ENCODE measurements at regions of chr15 and their contacts with region 1.

Region 1: DNA sequence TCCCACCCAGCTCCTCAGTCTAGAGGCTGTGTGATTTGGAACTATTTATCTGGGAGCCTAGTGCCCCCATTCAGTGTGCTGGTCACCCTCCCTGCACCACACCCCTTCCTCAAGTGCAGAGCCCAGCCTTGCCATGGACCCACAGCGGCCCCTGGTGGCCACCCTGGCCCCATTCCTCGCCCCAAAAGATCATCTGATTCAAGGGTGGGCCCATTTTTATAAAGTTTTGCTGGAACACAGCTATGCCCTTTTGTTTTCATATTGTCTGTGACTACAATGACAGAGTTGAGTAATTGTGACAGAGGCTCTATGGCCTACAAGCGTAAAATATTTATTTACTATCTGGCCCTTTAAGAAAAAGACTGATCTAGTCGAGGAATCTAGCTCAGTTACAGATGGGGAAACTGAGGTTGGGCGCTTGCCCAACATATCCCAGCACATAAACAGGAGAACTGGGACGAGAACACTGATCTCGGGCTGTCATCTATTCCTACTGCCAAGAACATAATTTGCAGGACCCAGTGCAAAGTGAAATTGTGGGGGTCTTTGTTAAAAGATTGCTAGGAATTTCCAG is 1.8 kb downstream of the FES start:
- DNase-seq: peak; percentile 66 to 85
- H3K4me3 ChIP-seq: no peak overlapping the region
- H3K4me3 Mint-ChIP-seq: no peak overlapping the region
- H3K27ac Mint-ChIP-seq: no peak overlapping the region
- H3K4me1 ChIP-seq: no peaks in the 10 kb centered on the region; the same call in 1 of the 2 replicates
- H3K4me1 Mint-ChIP-seq: no peaks in the 10 kb centered on the region
- H3K27me3 ChIP-seq: no peaks in the 10 kb centered on the region
- H3K27me3 Mint-ChIP-seq: no peaks in the 10 kb centered on the region
- CTCF ChIP-seq: peak; percentile 94 to 97

Region 2: DNA sequence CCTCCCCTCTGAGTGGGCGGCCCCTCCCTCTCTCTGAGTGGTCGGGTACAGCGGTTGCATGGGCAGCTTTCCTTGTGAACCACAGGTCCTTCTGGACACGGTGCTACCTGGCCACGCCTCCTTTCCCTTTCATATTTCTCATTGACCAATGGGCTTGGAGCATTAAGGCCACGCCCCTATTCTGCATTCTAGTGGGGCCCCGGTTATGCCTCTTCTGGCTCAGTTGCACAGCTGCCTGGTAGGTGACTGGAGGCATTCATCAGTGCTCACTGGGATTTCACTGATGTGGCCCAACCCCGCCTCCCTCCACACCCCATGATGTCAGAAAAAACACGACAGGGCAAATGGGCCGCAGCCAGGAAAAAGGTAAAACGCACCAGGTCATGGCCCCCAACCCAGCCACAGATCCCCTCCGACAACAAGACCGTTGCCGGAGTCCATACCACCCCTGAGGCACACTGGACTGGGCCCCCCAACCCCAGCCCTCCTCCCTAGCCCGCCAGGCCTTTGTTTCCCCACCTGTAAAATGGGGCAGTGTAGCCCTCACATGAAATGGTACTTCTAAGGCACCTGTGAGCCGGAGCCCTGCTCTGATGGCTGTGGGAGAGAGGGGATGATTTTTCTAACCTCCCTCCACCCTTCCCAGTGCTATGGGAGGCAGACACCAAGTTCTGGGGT is 594.3 kb before region 1 on chr15:
- CTCF ChIA-PET with region 1: no interaction called
- POLR2A ChIA-PET with region 1: no interaction called
- intact Hi-C with region 1: loop called (anchors 5 kb)
- DNase-seq: peak; percentile 58 to 74
- H3K4me3 ChIP-seq: no peak overlapping the region
- H3K4me3 Mint-ChIP-seq: no peak overlapping the region
- H3K27ac Mint-ChIP-seq: no peak overlapping the region
- H3K4me1 ChIP-seq: peaks cover 4% of the 10 kb centered on the region; the same call in 1 of the 2 replicates
- H3K4me1 Mint-ChIP-seq: peaks cover 7% of the 10 kb centered on the region
- H3K27me3 ChIP-seq: no peaks in the 10 kb centered on the region
- H3K27me3 Mint-ChIP-seq: no peaks in the 10 kb centered on the region
- CTCF ChIP-seq: no peak

Region 3: DNA sequence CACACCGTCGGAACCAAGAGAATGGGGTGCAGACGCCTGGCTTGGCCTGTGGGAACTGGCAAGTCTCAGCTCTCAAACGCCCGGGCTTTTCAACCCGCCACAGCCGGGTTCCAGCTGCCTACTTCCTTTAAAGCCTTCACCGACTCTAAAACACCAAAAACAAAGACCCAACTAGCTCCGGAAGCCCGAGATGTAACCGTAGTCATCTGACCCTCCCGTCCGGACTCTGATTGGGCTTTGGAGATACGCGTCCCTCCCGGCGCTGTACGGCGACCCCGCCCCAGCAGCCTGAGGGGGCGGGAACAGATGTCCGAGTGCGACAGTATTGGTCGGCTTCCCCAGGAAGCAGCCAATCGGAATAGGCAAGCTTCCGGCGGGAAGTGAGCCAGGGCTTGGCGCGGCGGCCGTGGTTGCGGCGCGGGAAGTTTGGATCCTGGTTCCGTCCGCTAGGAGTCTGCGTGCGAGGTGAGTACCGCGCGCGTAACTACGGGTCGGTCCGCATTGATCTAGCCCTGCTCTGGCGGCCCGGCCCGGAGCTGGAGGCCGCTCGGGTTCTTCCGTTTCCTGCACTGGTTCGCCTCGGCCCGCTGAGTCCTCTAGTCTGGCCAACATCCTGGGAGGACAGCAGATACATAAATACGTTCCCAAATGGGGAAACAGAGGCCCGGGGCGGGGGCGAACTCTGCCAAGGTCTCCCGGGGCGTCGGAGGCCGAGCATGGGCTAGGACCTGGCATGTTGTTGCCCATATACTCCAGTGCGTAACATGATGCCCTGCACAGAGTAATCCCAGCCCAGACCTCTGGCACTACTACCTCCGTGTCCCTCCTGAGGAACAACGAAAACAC is 168.9 kb before region 1 on chr15 and contains the start of gene BLM:
- CTCF ChIA-PET with region 1: interaction called, 3 read pairs
- POLR2A ChIA-PET with region 1: no interaction called
- intact Hi-C with region 1: loop called (anchors 1 kb)
- DNase-seq: peak; percentile 95
- H3K4me3 ChIP-seq: peak within 1 kb of the TSS; percentile 89
- H3K4me3 Mint-ChIP-seq: peak within 1 kb of the TSS; percentile 98
- H3K27ac Mint-ChIP-seq: peak within 1 kb of the TSS; percentile 99
- H3K4me1 ChIP-seq: peaks cover 7% of the 10 kb centered on the region
- H3K4me1 Mint-ChIP-seq: peaks cover 18% of the 10 kb centered on the region
- H3K27me3 ChIP-seq: no peaks in the 10 kb centered on the region
- H3K27me3 Mint-ChIP-seq: no peaks in the 10 kb centered on the region
- CTCF ChIP-seq: peak; percentile 10 to 20
- total RNA-seq, gene BLM: 15.6 and 18.1 TPM in 2 replicates

Measured in Caco-2 (cell line).